ENCODE measurements at regions of chr9 and their contacts with region 1.

Region 1: DNA sequence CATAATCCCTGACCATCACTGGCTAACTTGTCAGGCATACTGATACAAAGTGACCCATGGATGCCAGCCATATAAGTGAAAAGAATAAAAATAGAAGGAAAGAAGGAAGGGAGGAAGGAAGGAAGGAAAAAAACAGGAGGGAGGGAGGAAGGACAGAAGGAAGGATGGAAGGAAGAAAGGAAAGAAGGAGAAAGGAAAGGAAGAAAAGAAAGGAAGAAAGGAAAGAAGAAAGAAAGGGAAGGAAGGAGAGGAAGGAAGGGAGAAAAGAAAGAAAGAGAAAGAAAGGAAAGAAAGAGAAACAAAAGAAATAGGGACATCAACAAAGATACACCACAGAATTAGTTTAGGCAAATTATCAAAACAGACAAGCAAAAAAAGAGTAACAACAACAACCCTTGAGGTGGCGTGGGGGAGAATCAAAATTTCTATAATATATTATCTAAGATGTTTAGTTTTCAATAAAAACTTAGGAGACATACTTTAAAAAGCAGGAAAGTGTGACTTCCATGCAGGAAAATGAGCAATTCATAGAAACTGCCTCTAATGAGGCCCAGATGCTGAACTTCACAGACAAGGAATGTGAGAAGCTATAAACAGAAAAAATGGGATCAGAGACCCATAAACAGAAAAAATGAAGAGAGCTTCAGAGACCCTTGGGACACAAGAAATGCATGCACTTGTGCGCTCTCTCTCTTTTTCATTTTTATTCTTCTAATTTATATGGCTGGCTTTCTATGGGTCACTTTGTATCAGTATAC is 96.1 kb upstream of the NFIL3 start:
- DNase-seq: no peak
- H3K4me3 ChIP-seq: no peak overlapping the region
- H3K4me3 Mint-ChIP-seq: no peak overlapping the region
- H3K27ac ChIP-seq: no peak overlapping the region
- H3K27ac Mint-ChIP-seq: no peak overlapping the region
- H3K4me1 ChIP-seq: peaks cover 17 to 19% of the 10 kb centered on the region in 2 donors
- H3K4me1 Mint-ChIP-seq: peaks cover 21% of the 10 kb centered on the region
- H3K27me3 ChIP-seq: peaks cover 2 to 5% of the 10 kb centered on the region in 2 donors
- H3K27me3 Mint-ChIP-seq: peaks cover 4 to 10% (median 6%) of the 10 kb centered on the region in 3 donors
- CTCF ChIP-seq: no peak

Region 2: DNA sequence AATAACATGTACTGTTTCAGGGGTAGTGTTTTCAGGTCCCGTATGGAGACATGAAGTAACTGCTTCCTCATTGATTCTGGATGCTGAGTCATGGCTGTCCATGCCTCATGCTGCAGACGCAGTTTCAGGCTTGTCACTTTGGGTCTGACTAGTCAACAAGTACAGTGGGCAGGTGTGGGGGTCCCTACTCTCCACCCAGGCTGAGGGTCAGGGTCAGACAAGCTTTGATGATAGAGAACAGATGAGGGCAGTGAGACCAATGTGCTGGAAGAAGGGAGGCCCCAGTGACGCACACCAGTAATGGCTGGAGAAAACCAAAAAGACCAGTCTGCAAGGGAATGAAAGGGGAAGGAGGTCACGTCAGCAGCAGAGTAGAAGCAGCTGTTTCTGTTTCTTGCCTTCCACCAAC is 16.0 kb before region 1 on chr9:
- intact Hi-C with region 1: loop called in 1 of 2 experiments (anchors 2 kb)
- DNase-seq: peak; percentile 65 to 78 (median 74)
- H3K4me3 ChIP-seq: peak overlapping the region; percentile 29 to 74 (median 39)
- H3K4me3 Mint-ChIP-seq: peak overlapping the region; percentile 84 to 97
- H3K27ac ChIP-seq: peak overlapping the region; percentile 36 to 77
- H3K27ac Mint-ChIP-seq: peak overlapping the region; percentile 84 to 95 (median 92)
- H3K4me1 ChIP-seq: peaks cover 15 to 17% of the 10 kb centered on the region in 2 donors
- H3K4me1 Mint-ChIP-seq: peaks cover 14% of the 10 kb centered on the region
- H3K27me3 ChIP-seq: no peaks in the 10 kb centered on the region
- H3K27me3 Mint-ChIP-seq: peaks cover 2% of the 10 kb centered on the region in 3 donors
- CTCF ChIP-seq: no peak

Measured in CD14-positive monocyte (primary cell).